ENCODE measurements at regions of chr18 and their contacts with region 1.

Region 1: DNA sequence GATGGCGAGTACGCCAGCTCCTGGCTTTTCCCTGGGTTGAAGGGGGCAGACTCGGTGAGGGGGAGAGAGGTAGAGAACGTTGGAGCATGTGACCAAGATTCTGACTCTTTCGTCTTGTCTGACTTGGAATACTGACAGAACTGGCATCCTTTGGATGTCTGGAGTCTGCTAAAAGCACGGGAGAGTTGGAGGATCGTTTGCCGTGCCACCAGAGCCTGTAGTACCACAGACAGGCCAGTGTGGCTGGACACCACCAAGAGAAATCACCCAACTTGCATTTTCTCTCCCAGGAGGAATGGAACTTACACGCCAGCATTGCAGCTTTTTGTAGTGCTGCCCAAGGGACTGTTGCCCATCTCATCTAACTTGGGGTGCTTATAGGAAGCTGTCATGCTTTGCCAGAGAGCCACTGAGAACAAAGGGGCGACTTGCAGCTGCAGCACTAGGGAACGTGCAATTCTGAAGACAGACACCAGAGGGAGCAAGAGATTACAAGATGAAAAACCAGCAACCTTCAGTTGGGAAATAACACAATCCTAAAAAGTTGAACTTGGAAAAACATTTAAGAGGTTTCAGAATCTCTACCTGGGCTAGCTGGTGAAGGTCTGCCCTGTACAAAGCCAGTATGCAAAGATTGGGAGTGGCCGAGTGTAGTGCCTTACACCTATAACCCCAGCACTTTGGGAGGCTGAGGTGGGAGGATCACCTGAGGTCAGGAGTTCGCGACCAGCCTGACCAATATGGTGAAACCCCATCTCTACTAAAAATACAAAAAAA is 24.1 kb downstream of the PSMG2 start:
- DNase-seq: peak; percentile 80
- H3K4me3 Mint-ChIP-seq: no peak overlapping the region
- H3K27ac Mint-ChIP-seq: no peak overlapping the region
- H3K4me1 Mint-ChIP-seq: no peaks in the 10 kb centered on the region
- H3K27me3 Mint-ChIP-seq: no peaks in the 10 kb centered on the region
- CTCF ChIP-seq: peak; percentile 91

Region 2: GRCh38 chr18:12890506-12890905 is 163.5 kb after region 1 on chr18:
- CTCF ChIA-PET with region 1: no interaction called
- intact Hi-C with region 1: loop called (anchors 5 kb)
- DNase-seq: peak; percentile 22
- H3K4me3 Mint-ChIP-seq: no peak overlapping the region
- H3K27ac Mint-ChIP-seq: peak overlapping the region; percentile 31
- H3K4me1 Mint-ChIP-seq: peaks cover 31% of the 10 kb centered on the region
- H3K27me3 Mint-ChIP-seq: no peaks in the 10 kb centered on the region
- CTCF ChIP-seq: peak; percentile 35

Region 3: DNA sequence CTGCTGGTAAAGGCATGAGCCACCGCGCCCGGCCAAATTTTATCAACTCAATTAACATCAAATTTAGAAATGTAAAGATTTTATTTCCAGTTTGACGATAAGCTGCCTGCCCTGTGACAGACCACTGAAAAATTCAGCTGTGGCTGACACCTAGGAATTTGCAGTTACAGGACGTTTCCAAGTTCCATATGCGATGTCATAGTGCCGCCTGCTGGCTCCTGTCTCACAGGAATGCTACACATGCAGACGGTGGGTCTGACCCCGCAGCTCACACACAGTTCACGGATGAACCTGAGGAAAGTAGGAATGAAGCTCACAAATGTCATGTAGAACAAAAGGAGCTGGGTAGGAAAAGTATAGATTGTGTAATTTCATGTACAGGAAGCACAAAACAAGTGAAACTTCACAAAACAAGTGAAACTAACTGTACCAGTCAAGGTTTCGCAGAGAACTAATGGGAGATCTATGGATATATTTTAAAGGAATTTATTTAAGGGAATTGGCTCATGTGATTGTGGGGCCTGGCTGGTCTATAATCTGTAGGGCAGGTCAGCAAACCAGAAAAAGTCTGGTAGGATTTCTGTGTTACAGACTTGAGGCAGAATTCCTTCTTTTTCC is 207.6 kb after region 1 on chr18:
- CTCF ChIA-PET with region 1: interaction called, 8 read pairs
- intact Hi-C with region 1: loop called (anchors 1 kb)
- DNase-seq: peak; percentile 79
- H3K4me3 Mint-ChIP-seq: no peak overlapping the region
- H3K27ac Mint-ChIP-seq: no peak overlapping the region
- H3K4me1 Mint-ChIP-seq: peaks cover 9% of the 10 kb centered on the region
- H3K27me3 Mint-ChIP-seq: peaks cover 16% of the 10 kb centered on the region
- CTCF ChIP-seq: peak; percentile 92

Region 4: DNA sequence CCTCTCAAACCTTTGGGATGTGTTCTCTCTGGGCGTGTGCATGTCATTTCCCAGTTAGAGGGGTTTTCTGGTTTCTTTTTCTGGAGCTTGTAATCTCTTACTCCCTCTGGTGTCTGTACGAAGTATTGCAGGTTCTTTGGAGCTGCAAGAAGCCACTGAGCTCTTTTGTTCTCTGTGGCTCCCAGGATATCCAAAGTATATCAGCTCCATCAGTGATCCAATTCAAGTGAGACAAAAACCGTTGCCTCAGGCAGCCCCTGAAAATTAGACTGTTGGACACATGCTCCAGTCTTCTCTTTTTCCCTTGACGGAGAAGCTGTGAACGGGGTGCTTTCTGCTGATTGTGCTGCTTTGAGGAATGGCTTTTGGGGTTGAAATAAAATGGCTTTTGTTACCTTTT is 432.6 kb after region 1 on chr18:
- CTCF ChIA-PET with region 1: no interaction called
- intact Hi-C with region 1: loop called (anchors 5 kb)
- DNase-seq: peak; percentile 58
- H3K4me3 Mint-ChIP-seq: no peak overlapping the region
- H3K27ac Mint-ChIP-seq: no peak overlapping the region
- H3K4me1 Mint-ChIP-seq: no peaks in the 10 kb centered on the region
- H3K27me3 Mint-ChIP-seq: peaks cover 49% of the 10 kb centered on the region
- CTCF ChIP-seq: peak; percentile 74

Measured in Calu3 (cell line).